ENCODE measurements at regions of chr9 and their contacts with region 1.

Region 1: DNA sequence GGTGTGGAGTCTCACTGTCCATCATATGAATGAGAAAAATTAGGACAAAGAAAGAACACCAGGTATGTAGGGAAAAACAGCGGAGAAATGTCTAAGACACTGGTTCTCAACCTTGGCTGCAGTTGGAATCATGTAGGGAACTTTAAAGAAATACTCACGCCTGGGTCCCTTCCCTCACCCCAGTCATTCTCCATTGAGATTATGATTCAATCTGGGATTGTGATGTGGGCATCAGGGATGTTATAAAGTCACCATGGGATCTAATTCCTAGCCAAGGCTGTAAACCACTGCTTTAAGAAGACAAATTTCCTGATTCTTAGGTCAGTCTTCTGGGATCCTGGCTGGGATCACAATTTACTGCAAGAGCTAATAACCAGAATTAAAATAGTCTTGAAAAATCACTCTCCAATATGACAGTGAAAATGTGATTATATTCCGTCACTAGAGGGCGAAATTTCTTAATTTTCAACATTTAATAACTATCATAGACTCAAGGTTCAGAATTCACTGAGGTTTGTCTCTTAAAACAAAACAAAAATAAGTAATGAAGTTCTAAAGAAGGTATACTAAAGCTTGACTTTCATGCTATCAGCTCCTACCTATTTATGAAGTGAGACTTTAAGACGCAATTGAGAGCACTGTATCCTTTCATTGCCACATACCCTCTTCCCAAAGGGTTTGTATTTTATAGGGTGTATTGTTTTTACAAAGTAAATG is 60.5 kb downstream of the GLDC start:
- DNase-seq: peak; percentile 51
- CTCF ChIP-seq: peak; percentile 13

Region 2: GRCh38 chr9:6681147-6681956 is 96.3 kb after region 1 on chr9:
- in situ Hi-C with region 1: loop called (anchors 10 kb)
- DNase-seq: peak; percentile 94
- CTCF ChIP-seq: no peak

Region 3: GRCh38 chr9:6829045-6829444 is 244.0 kb after region 1 on chr9:
- in situ Hi-C with region 1: no loop called
- DNase-seq: no peak
- CTCF ChIP-seq: no peak